ENCODE measurements at regions of chr20 and their contacts with region 1.

Region 1: DNA sequence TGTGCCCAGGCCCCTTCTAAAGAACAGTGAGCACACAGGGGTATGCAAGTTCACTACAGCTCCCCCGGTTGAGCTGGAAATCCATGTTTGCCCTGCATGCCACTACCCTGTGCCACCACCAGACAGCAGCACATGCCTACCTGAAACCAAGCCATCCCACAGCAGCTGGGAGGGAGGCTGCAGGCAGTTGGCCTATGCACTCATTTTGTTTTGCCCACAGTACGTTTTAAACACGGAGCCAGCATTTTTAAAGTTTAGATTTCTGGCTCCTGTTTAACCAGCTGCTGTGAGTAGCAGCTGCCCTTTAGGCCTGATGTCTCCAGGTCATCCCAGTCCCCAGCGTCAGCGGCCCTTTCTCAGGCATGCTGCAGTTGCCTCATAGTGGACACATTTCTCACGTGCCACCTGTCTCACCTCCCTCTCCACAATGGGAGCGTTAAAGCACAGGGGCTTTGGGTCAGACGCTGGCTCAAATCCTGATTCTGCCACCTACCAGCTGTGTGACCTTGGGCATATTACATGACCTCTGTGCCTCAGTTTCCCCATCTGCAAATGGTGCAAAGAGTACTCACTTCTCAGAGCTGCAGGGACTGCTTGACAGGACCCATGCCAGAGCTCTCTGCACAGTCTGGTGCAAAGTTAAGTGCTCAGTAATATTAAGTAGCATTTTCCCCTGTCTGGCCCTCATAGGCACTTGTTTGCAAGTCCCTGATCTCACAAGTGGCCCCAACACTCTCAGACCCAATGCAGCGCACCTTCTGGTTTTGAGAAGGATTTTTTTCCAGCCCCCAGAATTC is 8.1 kb upstream of the UBE2V1 start:
- DNase-seq: peak in 1 of 2 donors; percentile 78
- H3K4me3 ChIP-seq: no peak overlapping the region
- H3K27ac ChIP-seq: no peak overlapping the region
- H3K4me1 ChIP-seq: peaks cover 0 to 6% of the 10 kb centered on the region in 2 donors
- H3K27me3 ChIP-seq: no peaks in the 10 kb centered on the region
- CTCF ChIP-seq: peak; percentile 80 to 87 (median 86)

Region 2: DNA sequence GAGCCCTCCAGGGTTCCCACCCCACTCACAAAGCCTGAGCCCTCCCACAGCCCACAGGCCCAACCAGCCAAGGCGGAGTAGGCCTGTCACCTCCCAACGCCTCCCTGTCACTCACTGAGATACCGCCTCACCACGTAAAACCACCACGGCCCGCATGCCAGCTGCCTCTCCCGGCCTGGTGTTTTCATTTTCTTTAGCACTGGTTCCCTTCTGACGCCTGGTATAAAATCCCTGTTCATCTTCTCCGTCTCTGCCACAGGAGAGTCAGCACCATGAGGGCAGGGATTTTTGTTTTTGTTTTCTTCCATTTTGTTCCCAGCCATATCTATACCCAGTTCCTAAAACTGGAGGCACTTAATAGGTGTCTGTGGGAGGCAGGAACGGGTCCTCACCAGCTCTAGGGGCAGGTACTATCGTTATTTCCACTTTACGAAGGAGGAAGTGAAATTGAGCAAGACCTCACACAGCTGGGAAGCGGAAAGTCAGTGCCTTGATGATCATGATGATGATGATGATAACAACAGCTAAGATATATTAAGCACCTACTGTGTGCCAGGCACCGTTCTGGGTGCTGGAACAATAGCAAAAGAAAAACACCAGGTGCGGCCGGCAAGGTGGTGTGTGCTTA is 79.7 kb before region 1 on chr20:
- intact Hi-C with region 1: no loop called
- DNase-seq: no peak
- H3K4me3 ChIP-seq: no peak overlapping the region
- H3K27ac ChIP-seq: no peak overlapping the region
- H3K4me1 ChIP-seq: peaks cover 0 to 3% of the 10 kb centered on the region in 2 donors
- H3K27me3 ChIP-seq: no peaks in the 10 kb centered on the region
- CTCF ChIP-seq: no peak

Region 3: DNA sequence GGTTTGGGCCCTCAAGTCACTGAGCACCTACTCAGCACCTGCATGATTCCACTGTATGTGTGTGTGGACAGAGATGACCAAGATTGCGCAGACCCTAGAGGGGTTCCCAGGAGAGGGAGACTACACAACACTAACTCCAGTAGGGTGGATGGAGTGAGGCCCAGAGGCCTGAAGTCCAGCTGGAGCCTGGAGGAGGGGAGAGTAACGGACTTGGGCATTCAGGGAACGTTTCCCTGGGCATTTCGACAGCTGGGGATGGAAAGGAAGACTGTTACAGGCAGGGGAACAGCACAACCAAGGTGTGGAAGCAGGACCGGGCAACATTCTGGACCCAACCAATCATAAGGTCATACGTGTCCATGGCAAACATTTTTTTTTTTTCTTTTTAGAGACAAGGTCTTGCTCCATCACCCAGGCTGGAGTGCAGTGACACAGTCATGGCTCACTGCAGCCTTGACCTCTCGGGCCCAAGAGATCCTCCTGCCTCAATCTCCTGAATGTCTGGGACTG is 58.5 kb after region 1 on chr20:
- intact Hi-C with region 1: loop called (anchors 2 kb)
- DNase-seq: no peak
- H3K4me3 ChIP-seq: no peak overlapping the region
- H3K27ac ChIP-seq: no peak overlapping the region
- H3K4me1 ChIP-seq: no peaks in the 10 kb centered on the region
- H3K27me3 ChIP-seq: no peaks in the 10 kb centered on the region
- CTCF ChIP-seq: peak in 1 of 3 experiments; percentile 29

Measured in ascending aorta (tissue), 2 donors.